CD4-positive, alpha-beta memory T cell (primary cell): ENCODE measurements at regions of chr11 and their contacts with region 1.

Region 1: GRCh38 chr11:72024069-72024754 is 25.5 kb downstream of the IL18BP start:
- DNase-seq: no peak
- H3K4me3 ChIP-seq: no peak overlapping the region
- H3K4me3 Mint-ChIP-seq: no peak overlapping the region
- H3K27ac ChIP-seq: no peak overlapping the region
- H3K27ac Mint-ChIP-seq: peak overlapping the region in 2 of 7 donors; percentile 61 to 68
- H3K4me1 ChIP-seq: peaks cover 25% of the 10 kb centered on the region
- H3K4me1 Mint-ChIP-seq: peaks cover 15 to 34% (median 27%) of the 10 kb centered on the region in 4 donors
- H3K27me3 ChIP-seq: no peaks in the 10 kb centered on the region
- H3K27me3 Mint-ChIP-seq: no peaks in the 10 kb centered on the region

Region 2: GRCh38 chr11:71998662-71999310 is 25.4 kb before region 1 on chr11 and contains the start of gene IL18BP:
- CTCF ChIA-PET with region 1: interaction called, 12 read pairs
- POLR2A ChIA-PET with region 1: no interaction called
- intact Hi-C with region 1: no loop called
- DNase-seq: peak; percentile 31 to 50 (median 46)
- H3K4me3 ChIP-seq: peak within 1 kb of the TSS; percentile 46 to 62
- H3K4me3 Mint-ChIP-seq: peak within 1 kb of the TSS; percentile 85 to 98 (median 92)
- H3K27ac ChIP-seq: peak within 1 kb of the TSS; percentile 65
- H3K27ac Mint-ChIP-seq: peak within 1 kb of the TSS; percentile 83 to 98 (median 97)
- H3K4me1 ChIP-seq: peaks cover 26% of the 10 kb centered on the region
- H3K4me1 Mint-ChIP-seq: peaks cover 19 to 40% (median 31%) of the 10 kb centered on the region in 4 donors
- H3K27me3 ChIP-seq: no peaks in the 10 kb centered on the region
- H3K27me3 Mint-ChIP-seq: no peaks in the 10 kb centered on the region
- total RNA-seq, gene IL18BP: 21.4 to 26.2 TPM

Region 3: DNA sequence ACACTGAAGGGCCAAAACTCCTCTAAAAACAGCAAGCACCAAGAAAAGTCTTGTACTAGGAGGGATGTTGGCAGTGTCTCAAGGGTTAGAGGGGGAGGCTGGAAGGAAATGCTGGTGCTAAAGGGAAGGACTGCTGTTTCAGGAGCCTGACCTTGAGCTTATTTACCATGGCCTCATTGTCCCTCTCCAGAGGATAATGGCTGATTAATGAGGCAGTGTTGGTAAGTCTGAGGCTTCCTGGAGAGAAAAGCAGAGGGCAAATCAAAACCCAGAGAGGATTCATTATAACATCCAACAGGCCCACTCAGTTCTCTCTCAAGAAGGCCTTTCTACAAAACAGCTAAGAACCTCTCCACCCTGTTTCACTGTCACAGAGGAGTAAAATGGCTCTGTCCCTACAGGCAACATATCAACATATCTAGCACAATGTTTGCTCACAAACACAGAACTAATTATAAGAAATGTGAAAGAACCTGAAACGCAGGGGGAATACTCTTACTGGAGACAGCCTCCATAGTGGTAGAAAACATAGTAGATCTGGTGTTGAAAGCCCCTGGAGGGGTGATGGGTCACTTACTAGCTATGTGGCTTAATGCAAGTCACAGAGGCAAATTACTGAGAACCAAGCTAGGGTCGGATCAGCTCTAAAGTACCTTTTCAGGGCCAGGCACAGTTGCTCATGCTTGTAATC is 24.7 kb after region 1 on chr11:
- CTCF ChIA-PET with region 1: interaction called, 14 read pairs
- POLR2A ChIA-PET with region 1: interaction called, 9 read pairs
- intact Hi-C with region 1: no loop called
- DNase-seq: no peak
- H3K4me3 ChIP-seq: no peak overlapping the region
- H3K4me3 Mint-ChIP-seq: no peak overlapping the region
- H3K27ac ChIP-seq: no peak overlapping the region
- H3K27ac Mint-ChIP-seq: peak overlapping the region in 2 of 7 donors; percentile 37 to 52
- H3K4me1 ChIP-seq: peaks cover under 1% of the 10 kb centered on the region
- H3K4me1 Mint-ChIP-seq: peaks cover 3 to 12% (median 7%) of the 10 kb centered on the region in 4 donors
- H3K27me3 ChIP-seq: no peaks in the 10 kb centered on the region
- H3K27me3 Mint-ChIP-seq: no peaks in the 10 kb centered on the region

Region 4: GRCh38 chr11:72072348-72072747 is 48.1 kb after region 1 on chr11:
- CTCF ChIA-PET with region 1: interaction called, 12 read pairs
- POLR2A ChIA-PET with region 1: no interaction called
- intact Hi-C with region 1: no loop called
- DNase-seq: no peak
- H3K4me3 ChIP-seq: no peak overlapping the region
- H3K4me3 Mint-ChIP-seq: peak overlapping the region in 1 of 8 donors; percentile 49
- H3K27ac ChIP-seq: no peak overlapping the region
- H3K27ac Mint-ChIP-seq: peak overlapping the region in 2 of 7 donors; percentile 57 to 64
- H3K4me1 ChIP-seq: peaks cover 26% of the 10 kb centered on the region
- H3K4me1 Mint-ChIP-seq: peaks cover 26 to 29% (median 26%) of the 10 kb centered on the region in 4 donors
- H3K27me3 ChIP-seq: no peaks in the 10 kb centered on the region
- H3K27me3 Mint-ChIP-seq: no peaks in the 10 kb centered on the region

Region 5: DNA sequence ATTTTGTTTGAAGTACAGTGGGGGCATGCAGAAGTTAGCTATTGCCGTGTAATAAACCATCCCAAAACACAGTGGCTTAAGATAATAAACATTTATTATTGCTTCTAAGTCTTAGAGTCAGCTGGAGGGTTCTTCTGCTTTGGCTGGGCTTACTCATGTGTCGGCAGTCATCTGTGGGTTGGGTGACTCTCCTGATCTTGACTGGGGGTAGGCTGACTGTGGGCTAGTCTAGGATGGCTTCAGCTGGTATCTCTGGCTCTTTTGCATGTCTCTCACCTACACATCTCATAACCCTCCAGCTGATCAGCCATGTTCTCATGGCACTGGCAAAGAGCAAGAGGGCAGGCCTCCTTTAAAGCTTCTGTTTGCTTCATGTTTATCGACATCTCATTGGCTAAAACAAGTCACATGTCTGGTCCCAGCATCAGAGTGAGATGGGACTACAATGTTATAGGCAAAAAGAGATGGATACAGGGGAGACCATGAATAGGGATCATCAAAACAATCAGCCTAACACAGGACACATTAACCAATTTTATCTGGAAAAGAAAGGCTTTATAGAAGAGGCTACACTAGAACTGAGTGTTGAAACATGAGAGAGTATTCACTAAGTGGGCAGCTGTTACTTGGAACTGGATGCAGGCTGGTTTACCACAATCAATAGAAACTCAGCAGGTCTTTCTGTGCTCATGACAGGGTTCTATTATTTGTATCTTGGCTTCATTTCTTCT is 61.6 kb after region 1 on chr11:
- CTCF ChIA-PET with region 1: interaction called, 352 read pairs
- POLR2A ChIA-PET with region 1: interaction called, 29 read pairs
- intact Hi-C with region 1: no loop called
- DNase-seq: no peak
- H3K4me3 ChIP-seq: no peak overlapping the region
- H3K4me3 Mint-ChIP-seq: no peak overlapping the region
- H3K27ac ChIP-seq: no peak overlapping the region
- H3K27ac Mint-ChIP-seq: peak overlapping the region in 6 of 7 donors; percentile 25 to 91 (median 70)
- H3K4me1 ChIP-seq: peaks cover 9% of the 10 kb centered on the region
- H3K4me1 Mint-ChIP-seq: peaks cover 18 to 28% (median 18%) of the 10 kb centered on the region in 4 donors
- H3K27me3 ChIP-seq: no peaks in the 10 kb centered on the region
- H3K27me3 Mint-ChIP-seq: no peaks in the 10 kb centered on the region

Region 6: GRCh38 chr11:72189461-72190275 is 165.5 kb after region 1 on chr11:
- CTCF ChIA-PET with region 1: interaction called, 10 read pairs
- POLR2A ChIA-PET with region 1: no interaction called
- intact Hi-C with region 1: no loop called
- DNase-seq: no peak
- H3K4me3 ChIP-seq: no peak overlapping the region
- H3K4me3 Mint-ChIP-seq: no peak overlapping the region
- H3K27ac ChIP-seq: no peak overlapping the region
- H3K27ac Mint-ChIP-seq: no peak overlapping the region
- H3K4me1 ChIP-seq: no peaks in the 10 kb centered on the region
- H3K4me1 Mint-ChIP-seq: no peaks in the 10 kb centered on the region
- H3K27me3 ChIP-seq: no peaks in the 10 kb centered on the region
- H3K27me3 Mint-ChIP-seq: no peaks in the 10 kb centered on the region